BJ (cell line): ENCODE measurements at regions of chr2 and their contacts with region 1.

Region 1: GRCh38 chr2:80238692-80239469 is 65.7 kb downstream of the LRRTM1 start:
- DNase-seq: no peak
- H3K4me3 ChIP-seq: no peak overlapping the region
- H3K27me3 ChIP-seq: no peaks in the 10 kb centered on the region; the same call in 1 of the 2 replicates
- CTCF ChIP-seq: peak; percentile 87

Region 2: DNA sequence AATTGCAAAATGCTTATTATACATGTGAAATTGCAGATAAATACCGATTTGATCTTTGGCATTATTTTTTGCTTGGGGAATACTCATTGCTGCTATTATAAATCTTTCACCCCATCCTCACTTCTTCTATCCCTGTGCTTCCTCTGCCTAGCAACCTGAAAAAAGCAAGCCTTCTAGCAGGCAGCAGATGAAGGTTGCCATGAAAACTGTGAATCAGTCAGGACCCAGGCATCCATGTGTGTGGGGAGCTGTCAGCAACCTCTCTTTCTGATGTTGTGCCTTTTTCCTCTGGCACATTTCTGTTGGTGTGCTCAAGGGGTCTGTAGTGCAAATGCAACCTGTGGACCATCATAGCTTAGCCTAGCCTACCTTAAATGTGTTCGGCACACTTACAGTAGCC is 298.5 kb before region 1 on chr2:
- CTCF ChIA-PET with region 1: interaction called, 14 read pairs
- POLR2A ChIA-PET with region 1: no interaction called
- DNase-seq: no peak
- H3K4me3 ChIP-seq: no peak overlapping the region
- H3K27me3 ChIP-seq: no peaks in the 10 kb centered on the region
- CTCF ChIP-seq: no peak

Region 3: GRCh38 chr2:80073134-80073561 is 165.7 kb before region 1 on chr2:
- CTCF ChIA-PET with region 1: interaction called, 89 read pairs
- POLR2A ChIA-PET with region 1: no interaction called
- DNase-seq: no peak
- H3K4me3 ChIP-seq: no peak overlapping the region
- H3K27me3 ChIP-seq: no peaks in the 10 kb centered on the region
- CTCF ChIP-seq: peak; percentile 76

Region 4: DNA sequence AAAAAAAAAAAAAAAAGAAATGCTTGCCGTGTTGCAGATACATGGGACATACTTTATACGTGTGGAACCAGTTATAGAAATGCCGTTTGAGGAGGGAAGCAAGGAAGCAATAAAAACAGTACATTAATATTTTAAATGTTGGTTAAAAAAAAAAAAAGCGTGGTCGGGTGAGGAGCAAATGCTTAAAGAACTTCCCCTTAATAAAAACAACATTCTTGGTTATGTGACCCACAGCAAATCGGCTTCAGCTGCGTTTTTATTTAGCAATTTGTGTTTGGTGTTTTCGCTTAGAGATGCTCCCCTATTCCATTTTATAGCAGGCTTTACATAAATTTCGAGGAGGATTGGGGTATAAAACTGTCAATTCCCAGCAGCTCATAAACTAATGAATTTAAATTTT is 157.9 kb before region 1 on chr2:
- CTCF ChIA-PET with region 1: interaction called, 89 read pairs
- POLR2A ChIA-PET with region 1: no interaction called
- DNase-seq: no peak
- H3K4me3 ChIP-seq: peak overlapping the region; percentile 27
- H3K27me3 ChIP-seq: no peaks in the 10 kb centered on the region
- CTCF ChIP-seq: no peak

Region 5: DNA sequence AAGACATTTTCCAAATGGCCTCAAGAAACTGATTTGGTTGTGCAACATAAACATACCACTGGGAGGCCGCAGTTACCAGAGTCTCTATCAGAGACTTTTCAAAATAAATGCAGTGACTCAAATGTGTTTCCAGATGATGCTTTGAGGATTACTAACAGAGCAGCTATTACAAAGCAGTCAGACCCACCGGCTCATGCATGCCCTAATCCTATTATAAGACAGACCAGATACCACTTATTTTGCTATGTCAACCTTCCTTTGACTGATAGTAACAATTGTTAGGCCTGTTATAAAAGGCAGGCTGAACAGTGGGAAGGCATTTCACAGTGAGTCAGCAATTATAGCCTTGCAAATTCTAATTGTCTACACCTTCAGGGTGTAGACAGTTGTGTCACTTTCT is 152.1 kb before region 1 on chr2:
- CTCF ChIA-PET with region 1: interaction called, 48 read pairs
- POLR2A ChIA-PET with region 1: no interaction called
- DNase-seq: peak; percentile 46
- H3K4me3 ChIP-seq: no peak overlapping the region
- H3K27me3 ChIP-seq: 0 out of 2 replicates have a peak, but pooled peaks cover 1% of the 10 kb centered on the region
- CTCF ChIP-seq: peak; percentile 47

Region 6: GRCh38 chr2:80222644-80223043 is 16.2 kb before region 1 on chr2:
- CTCF ChIA-PET with region 1: interaction called, 26 read pairs
- POLR2A ChIA-PET with region 1: no interaction called
- DNase-seq: no peak
- H3K4me3 ChIP-seq: no peak overlapping the region
- H3K27me3 ChIP-seq: no peaks in the 10 kb centered on the region
- CTCF ChIP-seq: no peak

Region 7: DNA sequence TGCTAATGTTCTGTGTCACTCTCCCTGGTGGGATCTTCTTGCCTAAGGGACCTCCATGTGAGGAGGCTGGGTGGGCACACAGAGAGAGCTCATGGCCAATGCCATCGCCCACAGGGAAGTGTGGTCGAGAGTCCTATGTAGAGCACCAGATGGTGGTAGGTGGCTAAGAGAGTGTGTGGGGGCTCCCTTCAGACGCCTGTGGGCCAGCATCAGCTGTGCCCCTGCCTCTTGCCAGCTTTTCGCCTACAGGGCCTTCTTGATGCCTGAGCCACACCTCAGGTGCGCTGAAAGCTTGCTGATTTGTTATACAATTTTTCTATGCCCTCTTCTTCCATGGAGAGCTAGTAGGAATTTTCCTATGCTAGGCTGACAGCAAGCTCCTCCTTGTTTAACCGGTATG is 27.4 kb after region 1 on chr2:
- CTCF ChIA-PET with region 1: interaction called, 16 read pairs
- POLR2A ChIA-PET with region 1: no interaction called
- DNase-seq: no peak
- H3K4me3 ChIP-seq: no peak overlapping the region
- H3K27me3 ChIP-seq: no peaks in the 10 kb centered on the region
- CTCF ChIP-seq: no peak